ENCODE measurements at regions of chr16 and their contacts with region 1.

Region 1: DNA sequence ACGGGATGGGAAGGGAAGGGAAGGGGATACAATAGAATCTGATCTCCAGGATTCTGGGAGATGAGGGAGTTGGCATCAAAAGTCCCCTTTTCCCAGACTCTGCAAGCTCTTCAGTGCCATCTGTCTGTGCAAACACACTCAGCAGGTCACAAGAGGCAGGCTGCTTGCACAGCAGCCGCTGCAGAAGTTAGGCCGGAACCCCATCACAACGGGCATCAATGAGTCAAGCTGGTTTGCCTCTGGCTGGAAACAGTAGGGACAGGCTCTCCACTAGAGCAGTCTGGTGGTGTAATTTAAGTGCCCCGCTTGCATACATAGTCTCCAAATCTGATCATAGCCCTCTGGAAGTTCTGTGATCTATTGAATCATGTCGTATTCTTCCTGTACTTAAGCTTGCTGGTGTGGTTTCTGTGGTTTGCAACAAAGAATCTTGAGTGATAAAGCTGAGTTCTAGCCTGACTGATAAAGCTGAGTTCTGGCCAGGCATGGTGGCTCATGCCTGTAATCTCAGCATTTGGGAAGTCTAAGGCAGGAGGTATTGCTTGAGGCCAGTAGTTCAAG is 33.7 kb upstream of the KDM8 start:
- DNase-seq: peak; percentile 90
- H3K4me3 Mint-ChIP-seq: peak overlapping the region; percentile 9
- H3K27ac Mint-ChIP-seq: peak overlapping the region; percentile 79
- H3K4me1 Mint-ChIP-seq: peaks cover 57% of the 10 kb centered on the region
- H3K27me3 Mint-ChIP-seq: no peaks in the 10 kb centered on the region

Region 2: GRCh38 chr16:27154705-27155521 is 14.7 kb before region 1 on chr16:
- CTCF ChIA-PET with region 1: interaction called, 18 read pairs
- POLR2A ChIA-PET with region 1: interaction called, 3 read pairs
- intact Hi-C with region 1: loop called (anchors 1 kb)
- DNase-seq: peak; percentile 78
- H3K4me3 Mint-ChIP-seq: no peak overlapping the region
- H3K27ac Mint-ChIP-seq: no peak overlapping the region
- H3K4me1 Mint-ChIP-seq: peaks cover 6% of the 10 kb centered on the region
- H3K27me3 Mint-ChIP-seq: no peaks in the 10 kb centered on the region

Region 3: DNA sequence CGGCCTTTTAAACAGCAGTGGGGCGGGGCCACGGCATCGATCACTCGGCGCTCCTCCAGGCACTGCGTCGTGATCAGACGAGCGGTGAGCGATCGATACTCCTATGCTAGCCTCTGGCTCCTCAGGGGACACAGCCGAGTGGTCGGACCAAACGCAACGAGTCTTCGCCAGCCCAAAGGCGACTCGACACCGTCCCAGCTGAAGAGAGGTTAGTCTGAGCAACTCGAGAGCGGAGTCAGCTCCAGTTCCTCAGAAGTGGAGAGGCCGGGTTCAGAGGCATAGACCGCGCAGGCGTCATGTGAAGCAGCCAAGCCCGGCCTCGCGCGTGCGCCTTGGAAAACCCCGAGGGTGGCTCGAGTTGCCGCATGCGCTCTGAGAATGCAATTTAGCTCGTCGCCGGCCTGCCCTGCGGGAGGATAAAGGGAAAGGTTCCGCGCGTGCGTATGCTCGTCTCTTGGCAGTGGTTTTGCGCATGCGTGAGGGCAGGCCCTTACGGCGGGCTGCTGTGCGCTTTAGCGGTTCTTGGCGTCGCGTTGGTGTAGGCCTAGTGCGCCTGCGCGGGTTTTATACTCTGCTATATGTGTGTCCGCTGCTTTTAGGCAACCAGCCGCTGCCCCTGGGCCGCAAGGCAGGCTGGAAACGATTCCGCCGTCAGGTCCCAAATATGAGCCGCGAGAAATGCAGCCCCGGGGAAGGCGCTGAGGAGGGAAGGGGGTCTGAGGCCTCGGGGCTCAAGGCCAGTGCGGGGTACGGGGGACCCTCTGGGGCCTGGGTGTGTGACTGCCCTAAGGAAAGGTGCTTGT is 34.0 kb after region 1 on chr16 and contains the start of gene KDM8:
- CTCF ChIA-PET with region 1: interaction called, 7 read pairs
- POLR2A ChIA-PET with region 1: no interaction called
- intact Hi-C with region 1: loop called (anchors 1 kb)
- DNase-seq: peak; percentile 100
- H3K4me3 Mint-ChIP-seq: peak within 1 kb of the TSS; percentile 95
- H3K27ac Mint-ChIP-seq: peak within 1 kb of the TSS; percentile 97
- H3K4me1 Mint-ChIP-seq: peaks cover 47% of the 10 kb centered on the region
- H3K27me3 Mint-ChIP-seq: no peaks in the 10 kb centered on the region
- total RNA-seq, gene KDM8: 8.7 to 9.7 TPM

Region 4: GRCh38 chr16:27461483-27462171 is 292.0 kb after region 1 on chr16:
- CTCF ChIA-PET with region 1: no interaction called
- POLR2A ChIA-PET with region 1: no interaction called
- intact Hi-C with region 1: loop called (anchors 1 kb)
- DNase-seq: no peak
- H3K4me3 Mint-ChIP-seq: no peak overlapping the region
- H3K27ac Mint-ChIP-seq: no peak overlapping the region
- H3K4me1 Mint-ChIP-seq: peaks cover 41% of the 10 kb centered on the region
- H3K27me3 Mint-ChIP-seq: no peaks in the 10 kb centered on the region

Measured in activated CD4-positive, alpha-beta memory T cell treated with anti-CD3 and anti-CD28 coated beads for 36 hours (primary cell).